Heart left ventricle (tissue), 16 donors: ENCODE measurements at regions of chr15 and their contacts with region 1.

Region 1: GRCh38 chr15:58227706-58228543 is 89.7 kb downstream of the AQP9 start:
- DNase-seq: peak; percentile 68 to 86 (median 71)
- ATAC-seq: peak; percentile 39 to 79 (median 66)
- H3K4me3 ChIP-seq: no peak overlapping the region
- H3K27ac ChIP-seq: peak overlapping the region in 11 of 12 donors; percentile 25 to 79 (median 67)
- H3K4me1 ChIP-seq: peaks cover 3 to 43% (median 27%) of the 10 kb centered on the region in 12 donors
- H3K27me3 ChIP-seq: no peaks in the 10 kb centered on the region
- CTCF ChIP-seq: peak; percentile 71 to 91 (median 84)
- POLR2A ChIP-seq: no peak

Region 2: GRCh38 chr15:58066042-58066867 is 161.7 kb before region 1 on chr15:
- intact Hi-C with region 1: no loop called
- DNase-seq: peak; percentile 66 to 88 (median 74)
- ATAC-seq: peak; percentile 74 to 97 (median 94)
- H3K4me3 ChIP-seq: peak overlapping the region; percentile 39 to 73 (median 62)
- H3K27ac ChIP-seq: peak overlapping the region in 8 of 12 donors; percentile 28 to 86 (median 76)
- H3K4me1 ChIP-seq: peaks cover 0 to 17% (median 1%) of the 10 kb centered on the region in 12 donors
- H3K27me3 ChIP-seq: peaks cover 6 to 66% (median 32%) of the 10 kb centered on the region in 9 donors
- CTCF ChIP-seq: peak; percentile 83 to 97 (median 88)
- POLR2A ChIP-seq: no peak

Region 3: GRCh38 chr15:58165661-58166060 is 62.3 kb before region 1 on chr15:
- intact Hi-C with region 1: no loop called
- DNase-seq: peak in 4 of 5 donors; percentile 54 to 84 (median 70)
- ATAC-seq: peak; percentile 47 to 79 (median 74)
- H3K4me3 ChIP-seq: no peak overlapping the region
- H3K27ac ChIP-seq: no peak overlapping the region
- H3K4me1 ChIP-seq: peaks cover 0 to 9% (median 2%) of the 10 kb centered on the region in 12 donors
- H3K27me3 ChIP-seq: peaks cover 0 to 4% (median 0%) of the 10 kb centered on the region in 9 donors
- CTCF ChIP-seq: no peak
- POLR2A ChIP-seq: no peak

Region 4: GRCh38 chr15:58331903-58332675 is 104.2 kb after region 1 on chr15:
- intact Hi-C with region 1: loop called in 2 of 10 experiments (anchors 5 to 10 kb)
- DNase-seq: peak; percentile 94 to 98 (median 96)
- ATAC-seq: peak; percentile 96 to 98 (median 97)
- H3K4me3 ChIP-seq: peak overlapping the region in 2 of 12 donors; percentile 1 to 14
- H3K27ac ChIP-seq: peak overlapping the region; percentile 79 to 95 (median 90)
- H3K4me1 ChIP-seq: peaks cover 8 to 48% (median 31%) of the 10 kb centered on the region in 12 donors
- H3K27me3 ChIP-seq: no peaks in the 10 kb centered on the region
- CTCF ChIP-seq: no peak
- POLR2A ChIP-seq: peak in 1 of 2 donors; percentile 13

Region 5: GRCh38 chr15:58770857-58771620 is 543.1 kb after region 1 on chr15 and contains the start of gene MINDY2:
- intact Hi-C with region 1: loop called in 2 of 10 experiments (anchors 5 to 10 kb)
- DNase-seq: peak; percentile 98 to 100 (median 99)
- ATAC-seq: peak; percentile 97 to 98 (median 98)
- H3K4me3 ChIP-seq: peak within 1 kb of the TSS; percentile 79 to 99 (median 93)
- H3K27ac ChIP-seq: peak within 1 kb of the TSS; percentile 90 to 99 (median 98)
- H3K4me1 ChIP-seq: peaks cover 0 to 50% (median 33%) of the 10 kb centered on the region in 12 donors
- H3K27me3 ChIP-seq: no peaks in the 10 kb centered on the region
- CTCF ChIP-seq: peak in 10 of 12 donors; percentile 19 to 55 (median 31)
- POLR2A ChIP-seq: peak in 1 of 2 donors; percentile 98
- total RNA-seq, gene MINDY2: 22.2 to 31.8 (median 26.7) TPM

Region 6: DNA sequence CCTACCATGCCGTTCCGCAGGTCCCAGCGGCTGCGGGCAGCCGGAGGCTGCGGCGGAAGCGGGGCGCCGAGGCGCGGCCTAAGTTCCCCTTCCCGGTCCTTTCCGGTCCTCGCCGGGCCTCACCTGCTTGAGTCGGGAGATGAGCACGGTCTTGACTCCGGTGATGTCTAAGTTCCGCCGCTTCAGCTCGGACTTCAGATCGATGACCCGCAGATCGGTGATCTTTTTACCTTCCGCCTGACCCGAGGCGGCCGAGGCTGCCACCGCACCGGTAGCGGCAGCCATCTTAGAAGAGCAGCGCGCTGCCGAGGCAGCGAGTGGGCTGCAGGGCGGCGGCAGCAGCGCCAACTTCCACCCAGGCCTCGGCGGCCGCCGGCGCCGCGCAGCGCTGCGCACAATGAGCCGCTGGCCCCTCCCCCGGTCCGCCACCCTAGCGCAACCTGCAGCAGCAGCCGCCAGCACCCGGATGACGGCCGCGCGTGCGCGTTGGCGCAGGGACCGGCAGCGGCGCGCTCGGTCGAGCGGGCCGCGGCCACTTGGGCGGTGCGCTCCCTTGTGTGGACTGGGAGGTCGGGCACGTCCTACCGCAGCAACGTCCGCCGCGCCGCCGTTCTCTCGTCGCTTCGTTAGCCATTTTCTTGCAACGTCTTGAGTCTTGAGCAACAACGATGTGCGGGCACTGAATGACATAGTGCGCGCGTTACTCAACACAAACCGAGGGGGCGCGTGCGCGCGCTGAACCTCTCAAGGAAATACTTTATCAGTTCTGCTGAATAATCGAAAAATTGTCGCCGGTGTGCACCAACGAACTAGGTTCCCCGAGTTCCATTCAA is 705.6 kb after region 1 on chr15 and contains the start of gene SLTM:
- intact Hi-C with region 1: loop called in 2 of 10 experiments (anchors 10 kb)
- DNase-seq: peak; percentile 94 to 97 (median 95)
- ATAC-seq: peak; percentile 90 to 99 (median 97)
- H3K4me3 ChIP-seq: peak within 1 kb of the TSS; percentile 54 to 99 (median 84)
- H3K27ac ChIP-seq: peak within 1 kb of the TSS; percentile 91 to 100 (median 99)
- H3K4me1 ChIP-seq: peaks cover 2 to 38% (median 26%) of the 10 kb centered on the region in 12 donors
- H3K27me3 ChIP-seq: no peaks in the 10 kb centered on the region
- CTCF ChIP-seq: peak in 8 of 12 donors; percentile 15 to 46 (median 30)
- POLR2A ChIP-seq: peak; percentile 72 to 95
- total RNA-seq, gene SLTM: 42.0 to 68.2 (median 48.1) TPM

Region 7: DNA sequence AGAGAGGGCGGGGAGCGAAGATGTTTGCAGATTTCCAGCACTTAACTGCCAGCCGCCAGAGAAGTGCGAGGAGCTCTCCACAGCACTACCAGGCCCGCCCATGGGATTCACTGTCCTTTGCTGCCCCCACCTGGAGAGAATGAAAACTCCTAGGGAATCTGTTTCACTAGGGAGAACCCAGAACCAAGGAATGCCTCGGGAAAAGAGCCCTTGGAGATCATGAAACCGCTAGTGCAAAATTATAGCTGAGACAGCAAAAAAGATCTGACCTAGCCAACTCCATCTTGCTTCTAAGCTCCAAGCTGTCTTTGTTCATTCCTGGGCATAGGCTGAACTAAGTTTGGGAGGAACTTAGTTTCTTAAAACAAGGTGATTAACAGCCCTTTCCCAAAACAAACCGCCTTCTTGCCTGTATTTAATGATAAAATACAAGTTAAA is 1301.1 kb after region 1 on chr15:
- intact Hi-C with region 1: loop called in 1 of 10 experiments (anchors 10 kb)
- DNase-seq: peak; percentile 69 to 79 (median 79)
- ATAC-seq: peak; percentile 86 to 96 (median 94)
- H3K4me3 ChIP-seq: no peak overlapping the region
- H3K27ac ChIP-seq: no peak overlapping the region
- H3K4me1 ChIP-seq: peaks cover 0 to 25% (median 0%) of the 10 kb centered on the region in 12 donors
- H3K27me3 ChIP-seq: peaks cover 0 to 14% (median 0%) of the 10 kb centered on the region in 9 donors
- CTCF ChIP-seq: peak; percentile 72 to 85 (median 78)
- POLR2A ChIP-seq: no peak